ENCODE measurements at regions of chr3 and their contacts with region 1.

Region 1: GRCh38 chr3:42032693-42033349 is 58.3 kb upstream of the TRAK1 start:
- DNase-seq: peak; percentile 66
- H3K4me3 ChIP-seq: no peak overlapping the region
- H3K27ac ChIP-seq: no peak overlapping the region
- H3K4me1 ChIP-seq: peaks cover 46% of the 10 kb centered on the region
- H3K27me3 ChIP-seq: no peaks in the 10 kb centered on the region
- CTCF ChIP-seq: no peak

Region 2: DNA sequence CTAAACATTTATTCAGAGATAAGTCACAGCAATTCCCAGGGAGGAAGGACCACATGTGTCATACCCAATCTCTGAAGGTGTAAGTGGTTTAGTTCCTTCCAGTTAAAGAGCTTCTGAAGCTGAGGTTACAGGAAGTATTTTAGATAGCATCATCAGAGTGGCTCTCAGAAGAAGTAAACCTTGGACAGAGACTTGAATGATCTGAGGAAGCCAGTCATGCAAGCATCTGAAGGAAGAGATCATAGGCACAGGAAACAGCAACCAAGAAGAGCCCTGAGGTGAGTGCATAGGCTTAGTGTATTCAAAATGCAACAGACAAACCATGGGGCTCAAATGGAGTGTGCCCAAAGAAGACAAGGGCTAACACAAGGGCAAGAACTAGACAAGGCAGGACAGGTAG is 281.2 kb before region 1 on chr3:
- CTCF ChIA-PET with region 1: no interaction called
- dilution Hi-C with region 1: no loop called
- in situ Hi-C with region 1: no loop called
- intact Hi-C with region 1: no loop called
- DNase-seq: no peak
- H3K4me3 ChIP-seq: no peak overlapping the region
- H3K27ac ChIP-seq: no peak overlapping the region
- H3K4me1 ChIP-seq: no peaks in the 10 kb centered on the region
- H3K27me3 ChIP-seq: no peaks in the 10 kb centered on the region
- CTCF ChIP-seq: no peak

Region 3: GRCh38 chr3:42055293-42055692 is 22.5 kb after region 1 on chr3:
- CTCF ChIA-PET with region 1: no interaction called
- dilution Hi-C with region 1: no loop called
- in situ Hi-C with region 1: no loop called
- intact Hi-C with region 1: loop called (anchors 2 kb)
- DNase-seq: peak; percentile 89
- H3K4me3 ChIP-seq: no peak overlapping the region
- H3K27ac ChIP-seq: peak overlapping the region; percentile 62
- H3K4me1 ChIP-seq: peaks cover 30% of the 10 kb centered on the region
- H3K27me3 ChIP-seq: no peaks in the 10 kb centered on the region
- CTCF ChIP-seq: no peak

Region 4: GRCh38 chr3:42071904-42072592 is 39.2 kb after region 1 on chr3:
- CTCF ChIA-PET with region 1: no interaction called
- dilution Hi-C with region 1: no loop called
- in situ Hi-C with region 1: loop called in 1 of 2 experiments (anchors 5 kb)
- intact Hi-C with region 1: no loop called
- DNase-seq: peak; percentile 82
- H3K4me3 ChIP-seq: peak overlapping the region; percentile 4 to 30 (median 6)
- H3K27ac ChIP-seq: peak overlapping the region; percentile 39
- H3K4me1 ChIP-seq: peaks cover 39% of the 10 kb centered on the region
- H3K27me3 ChIP-seq: no peaks in the 10 kb centered on the region
- CTCF ChIP-seq: no peak

Measured in mammary epithelial cell (primary cell).